Sigmoid colon (tissue), 7 donors: ENCODE measurements at regions of chr5 and their contacts with region 1.

Region 1: GRCh38 chr5:104739905-104740304 is 1177.3 kb upstream of the NUDT12 start:
- DNase-seq: no peak
- H3K4me3 ChIP-seq: no peak overlapping the region
- H3K27ac ChIP-seq: no peak overlapping the region
- H3K4me1 ChIP-seq: no peaks in the 10 kb centered on the region
- H3K27me3 ChIP-seq: no peaks in the 10 kb centered on the region
- CTCF ChIP-seq: no peak
- EP300 ChIP-seq: no peak
- POLR2A ChIP-seq: no peak

Region 2: GRCh38 chr5:104540448-104540847 is 199.5 kb before region 1 on chr5:
- intact Hi-C with region 1: loop called (anchors 2 kb)
- DNase-seq: no peak
- H3K4me3 ChIP-seq: no peak overlapping the region
- H3K27ac ChIP-seq: peak overlapping the region in 3 of 4 donors; percentile 54 to 74 (median 72)
- H3K4me1 ChIP-seq: peaks cover 0 to 53% (median 20%) of the 10 kb centered on the region in 4 donors
- H3K27me3 ChIP-seq: no peaks in the 10 kb centered on the region
- CTCF ChIP-seq: no peak
- EP300 ChIP-seq: no peak
- POLR2A ChIP-seq: no peak